Activated CD8-positive, alpha-beta T cell treated with anti-CD3 and anti-CD28 coated beads, Interleukin-2, amount 10 ng/mL, durations not matched to agents 7 days and 5 days (primary cell): ENCODE measurements at regions of chr17 and their contacts with region 1.

Region 1: DNA sequence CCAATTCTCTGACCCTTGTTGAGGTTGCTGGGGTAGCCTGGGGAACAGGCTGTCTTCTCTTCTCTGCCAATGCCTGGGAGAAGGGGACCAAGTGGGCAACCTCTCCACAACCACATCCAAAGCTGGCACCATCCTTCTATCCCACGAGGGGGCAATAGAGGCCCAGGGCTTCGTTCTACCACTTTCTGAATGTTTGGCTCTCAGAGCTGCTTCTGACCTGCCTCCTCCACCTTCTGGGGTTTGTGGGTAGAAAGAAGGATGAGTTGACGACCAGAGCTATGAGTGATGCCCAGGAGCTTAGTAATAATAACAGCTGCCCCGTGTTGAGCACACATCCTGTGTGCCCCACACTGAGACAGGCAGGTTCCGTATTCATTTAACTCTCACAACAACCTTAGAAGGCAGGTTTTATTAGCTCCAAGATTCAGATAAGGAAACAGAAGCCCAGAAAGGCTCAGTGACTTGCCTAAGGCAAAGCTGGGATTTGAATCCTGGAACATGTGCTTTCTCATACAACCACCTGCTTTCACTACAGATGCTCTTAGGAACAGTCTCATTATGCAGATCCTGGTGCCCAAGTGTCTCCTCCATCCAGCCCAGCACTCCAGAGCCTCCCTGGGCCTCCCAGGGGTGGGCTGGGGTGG is 11.1 kb downstream of the TSPOAP1 start:
- DNase-seq: peak; percentile 83
- ATAC-seq: peak; percentile 85
- H3K4me3 Mint-ChIP-seq: peak overlapping the region; percentile 27
- H3K27ac Mint-ChIP-seq: peak overlapping the region; percentile 71
- H3K4me1 Mint-ChIP-seq: peaks cover 19% of the 10 kb centered on the region
- H3K27me3 Mint-ChIP-seq: no peaks in the 10 kb centered on the region

Region 2: DNA sequence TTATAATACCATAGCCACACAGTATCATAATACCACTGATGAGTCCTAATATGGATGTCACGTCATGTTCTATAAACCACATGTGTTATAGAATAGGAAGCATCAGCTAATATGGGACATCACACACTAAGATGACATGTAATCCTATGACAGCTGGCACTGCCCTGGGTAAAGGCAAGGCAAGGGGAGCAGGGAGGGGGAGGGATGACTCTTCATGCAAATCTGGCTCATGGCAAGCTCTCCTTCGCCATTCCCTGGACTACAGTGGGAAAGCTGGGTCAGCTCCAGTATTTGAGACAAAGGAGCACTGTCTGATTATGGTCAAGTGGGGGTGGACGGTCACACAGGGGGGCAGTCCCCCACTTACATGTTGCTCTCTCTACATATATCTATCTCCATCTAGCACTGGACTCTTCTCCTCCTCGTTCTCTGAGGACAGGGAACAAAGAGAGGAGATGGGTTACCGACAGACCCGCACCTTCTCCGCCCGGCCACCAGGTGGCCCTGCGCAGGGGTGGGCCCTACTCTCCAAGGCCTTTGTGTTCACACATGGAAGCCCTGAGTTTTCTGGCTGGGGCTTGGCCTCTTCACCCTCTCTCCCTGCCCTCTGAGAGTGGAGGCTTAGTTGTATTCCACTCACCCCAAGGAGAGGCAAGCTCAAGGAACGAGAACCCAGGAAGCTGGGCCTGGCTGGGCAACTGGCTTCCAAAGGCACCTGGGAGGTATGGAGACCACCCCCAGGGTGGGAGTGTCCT is 13.4 kb before region 1 on chr17:
- CTCF ChIA-PET with region 1: interaction called, 39 read pairs
- POLR2A ChIA-PET with region 1: interaction called, 5 read pairs
- DNase-seq: peak; percentile 74
- ATAC-seq: peak; percentile 73
- H3K4me3 Mint-ChIP-seq: no peak overlapping the region
- H3K27ac Mint-ChIP-seq: no peak overlapping the region
- H3K4me1 Mint-ChIP-seq: peaks cover 3% of the 10 kb centered on the region
- H3K27me3 Mint-ChIP-seq: peaks cover 8% of the 10 kb centered on the region

Region 3: DNA sequence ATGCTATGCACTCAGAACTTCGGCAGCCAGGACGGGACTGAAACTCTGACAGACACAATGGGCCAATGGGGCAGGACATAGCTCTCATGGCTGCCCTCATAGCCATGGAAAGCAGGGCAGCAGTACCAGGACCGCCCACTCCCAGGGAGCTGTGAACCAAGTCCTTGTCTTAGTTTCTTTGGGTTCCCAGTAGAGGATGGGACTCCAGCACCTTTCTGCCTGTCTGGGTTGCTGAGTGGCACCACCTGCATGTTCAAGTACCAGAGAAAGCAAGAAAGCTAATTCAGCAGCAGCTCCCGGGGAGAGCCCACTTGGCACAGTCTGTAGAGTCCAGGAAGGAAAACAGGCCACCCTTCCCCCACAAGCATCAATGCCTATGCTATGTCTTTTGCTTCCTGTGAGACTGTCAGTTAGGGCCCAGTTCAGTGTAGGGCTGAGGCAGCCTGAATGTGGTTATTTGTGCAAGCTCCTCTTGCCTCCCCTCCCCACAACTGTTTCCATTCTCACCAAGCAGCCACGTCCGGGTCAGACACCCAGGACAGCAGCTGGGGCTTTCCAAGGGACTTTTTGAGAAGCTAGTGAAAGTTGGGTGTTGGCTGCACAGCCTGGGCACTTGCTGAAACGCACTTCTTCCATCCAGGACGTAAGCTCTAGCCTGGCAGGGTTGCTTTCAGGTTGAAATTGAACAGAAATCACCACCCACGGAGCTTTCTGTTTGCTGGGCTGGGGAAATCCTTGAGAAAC is 26.7 kb after region 1 on chr17:
- CTCF ChIA-PET with region 1: interaction called, 235 read pairs
- POLR2A ChIA-PET with region 1: interaction called, 2,649 read pairs
- DNase-seq: peak; percentile 91
- ATAC-seq: peak; percentile 76
- H3K4me3 Mint-ChIP-seq: peak overlapping the region; percentile 99
- H3K27ac Mint-ChIP-seq: peak overlapping the region; percentile 92
- H3K4me1 Mint-ChIP-seq: peaks cover 82% of the 10 kb centered on the region
- H3K27me3 Mint-ChIP-seq: no peaks in the 10 kb centered on the region

Region 4: GRCh38 chr17:58388302-58389168 is 71.0 kb after region 1 on chr17:
- CTCF ChIA-PET with region 1: interaction called, 11 read pairs
- POLR2A ChIA-PET with region 1: no interaction called
- DNase-seq: no peak
- ATAC-seq: no peak
- H3K4me3 Mint-ChIP-seq: no peak overlapping the region
- H3K27ac Mint-ChIP-seq: no peak overlapping the region
- H3K4me1 Mint-ChIP-seq: peaks cover 4% of the 10 kb centered on the region
- H3K27me3 Mint-ChIP-seq: peaks cover 2% of the 10 kb centered on the region

Region 5: GRCh38 chr17:58432806-58433572 is 115.4 kb after region 1 on chr17:
- CTCF ChIA-PET with region 1: interaction called, 57 read pairs
- POLR2A ChIA-PET with region 1: no interaction called
- DNase-seq: no peak
- ATAC-seq: no peak
- H3K4me3 Mint-ChIP-seq: no peak overlapping the region
- H3K27ac Mint-ChIP-seq: no peak overlapping the region
- H3K4me1 Mint-ChIP-seq: no peaks in the 10 kb centered on the region
- H3K27me3 Mint-ChIP-seq: peaks cover 2% of the 10 kb centered on the region

Region 6: GRCh38 chr17:58517734-58518609 is 200.4 kb after region 1 on chr17:
- CTCF ChIA-PET with region 1: interaction called, 11 read pairs
- POLR2A ChIA-PET with region 1: no interaction called
- DNase-seq: peak; percentile 100
- ATAC-seq: peak; percentile 86
- H3K4me3 Mint-ChIP-seq: peak overlapping the region; percentile 89
- H3K27ac Mint-ChIP-seq: peak overlapping the region; percentile 97
- H3K4me1 Mint-ChIP-seq: peaks cover 51% of the 10 kb centered on the region
- H3K27me3 Mint-ChIP-seq: no peaks in the 10 kb centered on the region